ENCODE measurements at regions of chr4 and their contacts with region 1.

Region 1: GRCh38 chr4:95158626-95159025 is 390.1 kb downstream of the UNC5C start:
- DNase-seq: no peak
- H3K4me3 ChIP-seq: no peak overlapping the region
- H3K27ac ChIP-seq: no peak overlapping the region
- H3K4me1 ChIP-seq: no peaks in the 10 kb centered on the region
- H3K27me3 ChIP-seq: no peaks in the 10 kb centered on the region
- CTCF ChIP-seq: no peak

Region 2: GRCh38 chr4:94889946-94890345 is 268.7 kb before region 1 on chr4:
- CTCF ChIA-PET with region 1: no interaction called
- POLR2A ChIA-PET with region 1: no interaction called
- intact Hi-C with region 1: no loop called
- DNase-seq: no peak
- H3K4me3 ChIP-seq: no peak overlapping the region
- H3K27ac ChIP-seq: no peak overlapping the region
- H3K4me1 ChIP-seq: no peaks in the 10 kb centered on the region
- H3K27me3 ChIP-seq: no peaks in the 10 kb centered on the region
- CTCF ChIP-seq: no peak

Region 3: DNA sequence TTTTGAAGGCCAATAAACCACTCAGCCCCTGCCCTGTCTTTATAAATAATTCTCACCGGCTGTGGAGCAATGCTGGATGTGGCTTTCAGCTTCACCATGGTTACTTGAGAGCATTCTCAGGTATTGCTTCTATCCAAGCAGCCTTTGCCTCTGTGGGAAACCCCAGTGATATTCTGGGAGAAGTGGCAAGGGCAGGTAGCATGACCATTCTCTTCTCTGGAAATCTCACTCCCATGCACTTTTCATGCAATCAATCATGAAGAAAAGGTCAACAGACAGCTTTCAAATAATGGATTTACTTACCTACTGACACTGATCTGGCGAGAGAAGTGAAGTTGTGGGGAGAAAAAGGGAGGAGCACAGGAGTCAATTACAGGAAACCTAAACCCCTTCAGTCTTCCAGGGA is 340.7 kb after region 1 on chr4:
- CTCF ChIA-PET with region 1: interaction called, 10 read pairs
- POLR2A ChIA-PET with region 1: no interaction called
- intact Hi-C with region 1: no loop called
- DNase-seq: no peak
- H3K4me3 ChIP-seq: no peak overlapping the region
- H3K27ac ChIP-seq: no peak overlapping the region
- H3K4me1 ChIP-seq: no peaks in the 10 kb centered on the region
- H3K27me3 ChIP-seq: no peaks in the 10 kb centered on the region
- CTCF ChIP-seq: no peak

Region 4: DNA sequence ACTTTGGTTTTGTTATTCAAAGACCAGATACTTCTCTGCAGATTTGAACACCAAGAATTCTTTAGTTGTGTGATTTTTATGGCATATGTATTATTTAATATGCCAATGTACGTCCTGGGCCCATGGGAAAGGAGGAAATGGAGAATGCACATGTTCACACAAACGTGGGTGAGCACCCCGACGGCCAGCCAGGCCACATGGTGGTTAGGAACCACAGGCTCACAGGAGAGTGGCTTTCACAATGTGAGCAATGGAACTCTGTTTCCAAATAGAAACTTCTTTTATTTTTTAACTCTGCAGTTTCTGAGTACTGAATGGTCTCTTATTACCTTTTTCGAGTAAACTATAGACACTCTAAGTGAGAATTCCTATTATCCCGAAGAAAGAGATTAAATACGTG is 448.1 kb after region 1 on chr4:
- CTCF ChIA-PET with region 1: no interaction called
- POLR2A ChIA-PET with region 1: no interaction called
- intact Hi-C with region 1: no loop called
- DNase-seq: no peak
- H3K4me3 ChIP-seq: no peak overlapping the region
- H3K27ac ChIP-seq: no peak overlapping the region
- H3K4me1 ChIP-seq: no peaks in the 10 kb centered on the region
- H3K27me3 ChIP-seq: no peaks in the 10 kb centered on the region
- CTCF ChIP-seq: no peak